ENCODE measurements at regions of chr7 and their contacts with region 1.

Region 1: GRCh38 chr7:36250317-36250716 is 97.3 kb downstream of the EEPD1 start:
- DNase-seq: no peak
- ATAC-seq: 0 out of 2 replicates have a peak, but pooled peaks have one; percentile 14
- H3K4me3 ChIP-seq: no peak overlapping the region
- H3K27ac ChIP-seq: no peak overlapping the region
- H3K4me1 ChIP-seq: peaks cover 6% of the 10 kb centered on the region; the same call in 1 of the 2 replicates
- H3K27me3 ChIP-seq: no peaks in the 10 kb centered on the region
- CTCF ChIP-seq: no peak

Region 2: GRCh38 chr7:36272567-36273269 is 22.4 kb after region 1 on chr7:
- CTCF ChIA-PET with region 1: no interaction called
- POLR2A ChIA-PET with region 1: interaction called, 16 read pairs
- in situ Hi-C with region 1: no loop called
- intact Hi-C with region 1: no loop called
- DNase-seq: no peak
- ATAC-seq: peak; percentile 24
- H3K4me3 ChIP-seq: no peak overlapping the region
- H3K27ac ChIP-seq: peak overlapping the region; percentile 71
- H3K4me1 ChIP-seq: peaks cover 53% of the 10 kb centered on the region
- H3K27me3 ChIP-seq: no peaks in the 10 kb centered on the region
- CTCF ChIP-seq: no peak

Measured in Panc1 (cell line).